CD8-positive, alpha-beta T cell (primary cell): ENCODE measurements at regions of chrX and their contacts with region 1.

Region 1: GRCh38 chrX:118502161-118502789 is 6.7 kb downstream of the DOCK11 start:
- DNase-seq: peak in 2 of 9 experiments; percentile 23 to 30
- ATAC-seq: peak; percentile 36
- H3K4me3 ChIP-seq: no peak overlapping the region
- H3K4me3 Mint-ChIP-seq: peak overlapping the region; percentile 55
- H3K27ac ChIP-seq: peak overlapping the region in 1 of 2 experiments; percentile 70
- H3K27ac Mint-ChIP-seq: peak overlapping the region; percentile 95
- H3K4me1 ChIP-seq: peaks cover 73% of the 10 kb centered on the region
- H3K4me1 Mint-ChIP-seq: peaks cover 70% of the 10 kb centered on the region
- H3K27me3 ChIP-seq: no peaks in the 10 kb centered on the region
- H3K27me3 Mint-ChIP-seq: no peaks in the 10 kb centered on the region
- CTCF ChIP-seq: no peak

Region 2: DNA sequence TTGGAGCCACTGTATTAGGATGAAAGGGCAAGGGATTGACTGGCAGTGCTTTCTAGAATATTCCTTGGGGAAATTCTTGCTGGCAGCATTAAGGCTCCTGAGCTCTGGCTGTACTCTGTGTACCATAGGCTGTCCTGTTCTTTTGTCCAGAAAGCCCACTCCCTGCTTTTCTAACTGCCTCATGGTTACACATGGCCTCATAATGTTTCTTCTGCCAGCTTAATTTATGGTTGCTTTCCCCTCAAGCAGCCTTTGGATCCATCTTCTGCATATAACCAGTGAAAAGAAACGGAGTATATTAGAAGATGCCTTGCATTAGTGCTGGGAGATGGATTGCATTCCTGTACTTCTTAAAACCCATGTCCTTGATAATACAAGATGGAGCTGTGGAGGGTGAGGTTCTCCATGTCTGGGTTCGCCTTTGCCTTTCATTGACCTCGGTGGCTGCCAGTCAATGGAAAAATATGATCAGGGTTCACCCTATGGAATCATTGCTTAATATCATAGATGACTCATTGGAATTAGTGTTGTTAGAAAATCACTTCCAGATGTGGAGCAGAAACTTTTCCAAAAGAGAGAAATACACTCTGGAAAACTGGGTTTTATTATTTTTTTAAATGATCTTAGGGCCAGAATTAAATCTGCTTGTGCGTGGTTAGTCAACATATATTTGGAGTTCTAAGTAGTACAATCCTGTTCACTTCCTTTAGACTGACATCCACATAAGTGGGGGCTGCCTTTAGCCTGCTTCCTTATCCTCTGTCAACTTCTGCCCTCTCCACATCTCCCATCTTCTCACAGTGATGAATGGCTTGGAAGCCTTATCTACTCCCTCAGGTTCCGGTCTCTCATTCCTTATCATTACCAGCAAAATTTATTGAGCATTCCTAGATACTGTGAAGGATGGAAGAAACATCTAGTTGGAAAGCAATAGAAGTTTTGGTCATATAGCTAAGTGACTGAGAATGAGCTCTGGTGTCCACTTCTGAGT is 18.2 kb after region 1 on chrX:
- CTCF ChIA-PET with region 1: interaction called, 4 read pairs
- POLR2A ChIA-PET with region 1: interaction called, 4 read pairs
- intact Hi-C with region 1: loop called (anchors 2 kb)
- DNase-seq: no peak
- ATAC-seq: no peak
- H3K4me3 ChIP-seq: no peak overlapping the region
- H3K4me3 Mint-ChIP-seq: no peak overlapping the region
- H3K27ac ChIP-seq: peak overlapping the region in 1 of 2 experiments; percentile 30
- H3K27ac Mint-ChIP-seq: peak overlapping the region; percentile 79
- H3K4me1 ChIP-seq: peaks cover 63% of the 10 kb centered on the region
- H3K4me1 Mint-ChIP-seq: peaks cover 69% of the 10 kb centered on the region
- H3K27me3 ChIP-seq: no peaks in the 10 kb centered on the region
- H3K27me3 Mint-ChIP-seq: no peaks in the 10 kb centered on the region
- CTCF ChIP-seq: no peak